Activated CD4-positive, alpha-beta memory T cell treated with anti-CD3 and anti-CD28 coated beads for 36 hours (primary cell): ENCODE measurements at regions of chr19 and their contacts with region 1.

Region 1: DNA sequence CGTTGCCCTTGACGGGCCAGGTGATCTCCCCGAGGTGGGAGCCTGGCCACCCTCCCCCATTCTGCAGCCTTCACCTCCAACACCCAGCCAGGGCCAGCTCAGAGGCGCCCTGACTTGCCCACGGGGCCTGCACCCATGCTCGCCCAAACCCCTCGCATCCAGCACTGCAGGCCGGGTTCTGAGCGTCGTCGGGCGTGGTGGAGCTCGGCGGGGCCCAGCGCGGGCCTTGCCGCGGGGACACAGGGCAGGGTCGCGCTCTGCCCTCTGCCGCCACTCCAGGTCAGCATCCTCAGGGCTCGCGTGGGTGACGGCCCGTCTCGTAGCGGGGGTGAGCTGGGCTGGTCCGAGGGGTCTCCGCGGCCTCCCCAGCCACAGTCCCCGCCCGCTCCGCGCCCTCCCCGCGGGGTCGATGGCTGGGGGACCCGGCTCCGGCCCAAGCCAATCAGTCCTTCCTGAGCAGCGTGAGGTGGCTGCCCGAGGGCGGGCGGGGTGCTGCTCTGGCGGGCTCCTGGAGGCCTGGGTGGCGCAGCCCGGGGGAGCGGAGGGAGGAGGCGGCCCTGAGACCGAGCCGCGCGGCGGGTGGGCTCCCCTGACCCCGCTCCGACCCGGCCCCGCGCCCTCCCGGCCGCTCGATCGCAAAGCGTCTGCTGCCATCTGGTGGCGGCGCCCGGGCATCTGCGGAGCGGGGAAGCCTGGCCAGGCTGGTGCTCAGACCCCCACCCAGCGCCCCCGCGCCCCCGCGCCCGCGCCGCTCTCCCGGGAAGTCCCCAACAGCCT is 61.4 kb downstream of the CCNE1 start:
- DNase-seq: peak; percentile 73
- H3K4me3 Mint-ChIP-seq: peak overlapping the region; percentile 52
- H3K27ac Mint-ChIP-seq: no peak overlapping the region
- H3K4me1 Mint-ChIP-seq: peaks cover 9% of the 10 kb centered on the region
- H3K27me3 Mint-ChIP-seq: peaks cover 18% of the 10 kb centered on the region

Region 2: GRCh38 chr19:29735800-29736199 is 137.4 kb before region 1 on chr19:
- CTCF ChIA-PET with region 1: interaction called, 86 read pairs
- POLR2A ChIA-PET with region 1: no interaction called
- intact Hi-C with region 1: loop called (anchors 1 kb)
- DNase-seq: no peak
- H3K4me3 Mint-ChIP-seq: no peak overlapping the region
- H3K27ac Mint-ChIP-seq: no peak overlapping the region
- H3K4me1 Mint-ChIP-seq: no peaks in the 10 kb centered on the region
- H3K27me3 Mint-ChIP-seq: peaks cover 7% of the 10 kb centered on the region

Region 3: GRCh38 chr19:29761575-29762232 is 111.5 kb before region 1 on chr19:
- CTCF ChIA-PET with region 1: interaction called, 103 read pairs
- POLR2A ChIA-PET with region 1: no interaction called
- intact Hi-C with region 1: loop called (anchors 1 kb)
- DNase-seq: no peak
- H3K4me3 Mint-ChIP-seq: no peak overlapping the region
- H3K27ac Mint-ChIP-seq: no peak overlapping the region
- H3K4me1 Mint-ChIP-seq: peaks cover 2% of the 10 kb centered on the region
- H3K27me3 Mint-ChIP-seq: no peaks in the 10 kb centered on the region

Region 4: GRCh38 chr19:29785955-29786589 is 87.1 kb before region 1 on chr19:
- CTCF ChIA-PET with region 1: interaction called, 17 read pairs
- POLR2A ChIA-PET with region 1: interaction called, 4 read pairs
- intact Hi-C with region 1: no loop called
- DNase-seq: peak; percentile 42
- H3K4me3 Mint-ChIP-seq: no peak overlapping the region
- H3K27ac Mint-ChIP-seq: no peak overlapping the region
- H3K4me1 Mint-ChIP-seq: no peaks in the 10 kb centered on the region
- H3K27me3 Mint-ChIP-seq: no peaks in the 10 kb centered on the region

Region 5: GRCh38 chr19:29831041-29831548 is 42.1 kb before region 1 on chr19:
- CTCF ChIA-PET with region 1: no interaction called
- POLR2A ChIA-PET with region 1: no interaction called
- intact Hi-C with region 1: no loop called
- DNase-seq: peak; percentile 84
- H3K4me3 Mint-ChIP-seq: peak overlapping the region; percentile 69
- H3K27ac Mint-ChIP-seq: peak overlapping the region; percentile 89
- H3K4me1 Mint-ChIP-seq: peaks cover 38% of the 10 kb centered on the region
- H3K27me3 Mint-ChIP-seq: no peaks in the 10 kb centered on the region

Region 6: DNA sequence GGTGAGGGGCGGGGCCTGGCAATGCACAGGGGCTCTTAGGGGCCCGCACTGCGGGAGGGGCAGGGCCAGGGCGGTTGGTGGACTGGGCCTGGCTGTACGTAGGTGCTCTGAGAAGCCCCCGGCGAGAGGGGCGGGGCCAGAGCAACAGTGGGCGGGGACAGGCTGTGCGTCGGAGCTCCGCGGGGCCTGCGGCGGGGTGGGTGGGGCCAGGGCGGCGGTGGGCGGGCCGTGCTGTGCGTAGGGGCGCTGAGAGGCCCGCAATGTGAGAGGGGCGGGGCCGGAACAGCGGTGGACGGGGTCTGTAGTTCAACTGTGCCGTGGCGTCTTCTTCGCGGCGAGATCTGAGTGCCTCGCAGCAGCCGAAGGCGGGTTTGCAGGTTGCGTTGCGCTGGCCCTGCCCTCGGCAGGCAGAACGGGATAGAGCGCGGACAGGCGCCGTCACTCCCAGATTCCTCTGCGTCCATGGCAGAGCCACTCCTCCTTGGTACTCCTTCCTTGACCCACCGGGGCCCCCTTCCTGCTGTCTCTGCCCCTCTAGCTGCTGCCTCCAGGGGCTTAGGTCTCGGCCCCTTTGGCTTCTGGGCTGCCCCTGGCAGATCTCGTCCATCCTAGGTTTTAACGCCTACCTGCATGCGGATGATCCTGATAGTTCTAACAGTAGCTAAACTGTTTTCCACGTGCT is 28.2 kb before region 1 on chr19:
- CTCF ChIA-PET with region 1: interaction called, 11 read pairs
- POLR2A ChIA-PET with region 1: no interaction called
- intact Hi-C with region 1: no loop called
- DNase-seq: peak; percentile 96
- H3K4me3 Mint-ChIP-seq: peak overlapping the region; percentile 81
- H3K27ac Mint-ChIP-seq: peak overlapping the region; percentile 85
- H3K4me1 Mint-ChIP-seq: peaks cover 9% of the 10 kb centered on the region
- H3K27me3 Mint-ChIP-seq: no peaks in the 10 kb centered on the region

Region 7: DNA sequence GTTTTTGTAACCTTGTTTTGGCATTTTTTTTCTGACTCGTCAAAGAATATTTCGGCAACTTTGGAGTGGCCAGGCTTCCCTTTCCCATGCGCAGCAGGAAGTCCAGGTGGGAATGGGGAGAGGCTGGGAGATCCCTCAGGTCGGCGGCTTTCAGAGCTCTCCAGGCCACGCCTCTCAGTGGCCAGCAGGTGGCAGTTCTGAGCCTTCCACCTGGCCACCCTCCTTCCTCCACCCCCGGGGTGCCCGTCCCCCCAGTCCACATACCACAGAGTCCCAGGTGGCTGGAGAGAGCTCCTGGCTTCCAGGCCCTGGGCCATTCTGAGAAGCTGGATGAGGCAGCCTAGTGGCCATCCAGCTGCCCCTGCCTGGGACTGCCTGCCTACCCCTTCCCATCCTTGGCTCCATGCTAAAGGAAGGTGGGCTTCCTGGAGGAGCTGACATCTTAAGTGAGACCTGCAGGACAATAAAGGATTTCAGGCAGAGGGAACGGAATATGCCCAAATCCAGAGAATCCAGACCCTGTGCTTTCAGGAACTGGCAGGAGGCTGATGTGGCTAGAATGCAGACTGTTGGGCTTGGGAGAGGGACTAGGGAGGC is 15.1 kb before region 1 on chr19:
- CTCF ChIA-PET with region 1: interaction called, 28 read pairs
- POLR2A ChIA-PET with region 1: interaction called, 3 read pairs
- intact Hi-C with region 1: no loop called
- DNase-seq: peak; percentile 58
- H3K4me3 Mint-ChIP-seq: no peak overlapping the region
- H3K27ac Mint-ChIP-seq: no peak overlapping the region
- H3K4me1 Mint-ChIP-seq: peaks cover under 1% of the 10 kb centered on the region
- H3K27me3 Mint-ChIP-seq: peaks cover 20% of the 10 kb centered on the region

Region 8: DNA sequence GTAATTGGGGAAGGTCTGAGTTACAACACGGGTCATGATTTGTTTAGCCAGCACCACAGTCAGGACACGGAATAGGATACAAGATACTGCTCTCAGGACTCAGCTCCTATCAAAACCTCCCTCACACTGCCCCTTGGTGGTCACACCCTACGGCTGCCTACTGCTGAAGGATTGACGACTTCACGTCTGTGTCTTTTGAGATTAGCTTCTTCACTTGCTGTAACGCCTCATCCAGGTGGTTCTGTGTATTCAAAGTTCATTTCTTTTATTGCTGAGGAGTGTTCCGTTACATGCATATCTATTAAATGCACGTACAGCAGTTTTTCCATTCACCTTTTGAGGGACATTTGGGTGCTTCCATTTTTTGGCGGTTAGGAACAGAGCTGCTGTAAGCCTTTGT is 115.1 kb after region 1 on chr19:
- CTCF ChIA-PET with region 1: no interaction called
- POLR2A ChIA-PET with region 1: no interaction called
- intact Hi-C with region 1: no loop called
- DNase-seq: no peak
- H3K4me3 Mint-ChIP-seq: no peak overlapping the region
- H3K27ac Mint-ChIP-seq: no peak overlapping the region
- H3K4me1 Mint-ChIP-seq: peaks cover 12% of the 10 kb centered on the region
- H3K27me3 Mint-ChIP-seq: no peaks in the 10 kb centered on the region

Region 9: GRCh38 chr19:30649934-30650614 is 776.9 kb after region 1 on chr19:
- CTCF ChIA-PET with region 1: interaction called, 3 read pairs
- POLR2A ChIA-PET with region 1: no interaction called
- intact Hi-C with region 1: loop called (anchors 10 kb)
- DNase-seq: peak; percentile 55
- H3K4me3 Mint-ChIP-seq: no peak overlapping the region
- H3K27ac Mint-ChIP-seq: no peak overlapping the region
- H3K4me1 Mint-ChIP-seq: no peaks in the 10 kb centered on the region
- H3K27me3 Mint-ChIP-seq: peaks cover 15% of the 10 kb centered on the region